Activated T-helper 1 cell treated with anti-CD3 and anti-CD28 coated beads, Interleukin-12 subunit alpha, Interleukin-12 subunit beta, Interleukin-2, Interleukin-4 antibody, amounts not matched to agents 30 ng/mL and 10 ng/mL and 1 ng/mL, durations not matched to agents 14 hours and 24 hours and 36 hours (primary cell): ENCODE measurements at regions of chr7 and their contacts with region 1.

Region 1: DNA sequence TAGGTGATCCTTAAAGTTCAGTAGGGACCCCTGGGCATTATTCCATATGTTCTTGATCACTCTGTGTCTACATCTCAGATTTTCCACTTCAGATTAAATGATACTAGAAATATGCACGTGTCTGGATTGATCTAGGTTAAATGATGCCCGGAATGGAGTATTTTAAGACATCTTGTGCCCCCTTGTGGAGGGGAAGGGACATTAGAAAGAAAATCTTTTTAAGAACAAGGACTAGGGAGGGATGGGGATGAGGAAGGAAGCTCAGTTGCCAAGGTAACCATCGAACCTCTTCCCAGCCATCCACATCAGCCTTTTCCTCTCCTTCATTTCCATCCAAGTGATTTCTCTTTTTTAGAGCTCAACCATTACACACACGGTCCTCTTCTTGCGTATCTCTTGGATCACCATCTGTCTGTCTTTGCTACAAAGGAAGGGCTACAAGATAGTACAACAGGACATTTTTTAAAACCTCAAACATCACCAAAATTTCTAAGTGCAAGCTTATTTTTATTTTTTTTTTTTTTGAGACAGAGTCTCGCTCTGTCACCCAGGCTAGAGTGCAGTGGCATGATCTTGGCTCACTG is 40.5 kb downstream of the PRSS2 start:
- DNase-seq: no peak
- H3K4me3 Mint-ChIP-seq: peak overlapping the region; percentile 79
- H3K27ac Mint-ChIP-seq: peak overlapping the region; percentile 99
- H3K4me1 Mint-ChIP-seq: peaks cover 80% of the 10 kb centered on the region
- H3K27me3 Mint-ChIP-seq: peaks cover 2% of the 10 kb centered on the region

Region 2: GRCh38 chr7:140924019-140924820 is 1887.0 kb before region 1 on chr7:
- intact Hi-C with region 1: loop called (anchors 10 kb)
- DNase-seq: peak; percentile 69
- H3K4me3 Mint-ChIP-seq: no peak overlapping the region
- H3K27ac Mint-ChIP-seq: no peak overlapping the region
- H3K4me1 Mint-ChIP-seq: peaks cover 11% of the 10 kb centered on the region
- H3K27me3 Mint-ChIP-seq: no peaks in the 10 kb centered on the region

Region 3: DNA sequence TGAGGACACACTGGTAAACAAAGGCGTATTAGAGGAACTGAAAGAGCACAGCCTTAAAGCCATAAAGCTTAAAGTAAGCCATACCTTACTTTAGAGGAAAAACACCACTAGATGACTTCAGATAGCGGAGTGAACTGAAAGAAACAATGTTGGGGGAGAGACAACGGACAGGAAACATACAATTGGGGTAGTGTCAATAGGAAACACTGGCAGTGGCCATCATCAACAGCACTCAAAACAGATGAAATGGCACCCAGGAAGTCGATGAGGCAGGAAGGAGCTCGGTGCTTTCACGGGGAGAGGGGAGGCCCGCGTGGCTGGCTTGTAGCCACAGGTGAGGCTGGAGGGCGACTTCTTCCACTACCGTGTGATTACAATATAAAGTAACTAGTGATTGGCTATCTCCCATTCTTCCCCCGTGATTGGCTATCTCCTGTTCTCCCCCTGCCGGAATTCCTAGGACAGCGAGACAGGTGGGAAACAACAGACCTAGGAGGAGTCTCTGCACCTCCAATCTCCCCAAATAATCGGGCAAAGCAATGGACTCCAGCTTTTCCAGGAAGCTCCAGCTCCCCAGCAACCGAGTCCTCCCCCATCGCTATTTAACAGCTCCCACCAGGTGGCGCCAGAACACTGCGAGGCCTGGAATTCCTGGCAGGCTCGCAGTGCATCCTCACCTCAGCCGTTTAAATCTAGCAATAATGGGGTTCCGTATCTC is 835.3 kb before region 1 on chr7:
- intact Hi-C with region 1: loop called (anchors 10 kb)
- DNase-seq: peak; percentile 34
- H3K4me3 Mint-ChIP-seq: peak overlapping the region; percentile 73
- H3K27ac Mint-ChIP-seq: no peak overlapping the region
- H3K4me1 Mint-ChIP-seq: peaks cover 12% of the 10 kb centered on the region
- H3K27me3 Mint-ChIP-seq: no peaks in the 10 kb centered on the region

Region 4: GRCh38 chr7:142496545-142497041 is 314.7 kb before region 1 on chr7:
- intact Hi-C with region 1: loop called (anchors 5 kb)
- DNase-seq: no peak
- H3K4me3 Mint-ChIP-seq: peak overlapping the region; percentile 32
- H3K27ac Mint-ChIP-seq: no peak overlapping the region
- H3K4me1 Mint-ChIP-seq: peaks cover 31% of the 10 kb centered on the region
- H3K27me3 Mint-ChIP-seq: peaks cover 7% of the 10 kb centered on the region

Region 5: DNA sequence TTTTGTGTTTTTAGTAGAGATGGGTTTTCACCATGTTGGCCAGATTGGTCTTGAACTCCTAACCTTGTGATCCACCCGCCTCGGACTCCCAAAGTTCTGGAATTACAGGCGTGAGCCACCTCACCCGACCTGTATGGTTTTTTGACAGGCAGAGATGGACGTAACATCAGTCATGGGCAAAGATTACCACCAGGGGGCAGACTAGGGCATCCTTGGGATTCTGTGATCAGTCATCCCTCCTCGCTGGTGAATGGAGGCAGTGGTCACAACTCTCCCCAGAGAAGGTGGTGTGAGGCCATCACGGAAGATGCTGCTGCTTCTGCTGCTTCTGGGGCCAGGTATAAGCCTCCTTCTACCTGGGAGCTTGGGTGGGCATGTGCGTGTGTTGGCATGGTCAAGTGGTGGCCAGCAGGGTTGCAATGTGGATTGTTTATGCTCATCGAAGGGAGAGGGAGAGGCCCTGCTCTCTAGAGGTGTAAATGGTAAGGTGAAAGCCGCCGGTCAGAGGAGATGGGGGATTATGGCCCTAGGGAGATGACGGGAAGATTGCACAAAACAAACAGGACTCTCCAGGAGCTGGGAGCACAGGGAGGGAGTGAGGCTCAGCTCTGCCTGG is 184.7 kb before region 1 on chr7:
- intact Hi-C with region 1: loop called (anchors 2 kb)
- DNase-seq: peak; percentile 40
- H3K4me3 Mint-ChIP-seq: peak overlapping the region; percentile 85
- H3K27ac Mint-ChIP-seq: peak overlapping the region; percentile 82
- H3K4me1 Mint-ChIP-seq: no peaks in the 10 kb centered on the region
- H3K27me3 Mint-ChIP-seq: peaks cover 18% of the 10 kb centered on the region

Region 6: GRCh38 chr7:142796608-142797385 is 14.4 kb before region 1 on chr7:
- intact Hi-C with region 1: loop called (anchors 1 kb)
- DNase-seq: no peak
- H3K4me3 Mint-ChIP-seq: peak overlapping the region; percentile 97
- H3K27ac Mint-ChIP-seq: peak overlapping the region; percentile 99
- H3K4me1 Mint-ChIP-seq: peaks cover 77% of the 10 kb centered on the region
- H3K27me3 Mint-ChIP-seq: no peaks in the 10 kb centered on the region

Region 7: DNA sequence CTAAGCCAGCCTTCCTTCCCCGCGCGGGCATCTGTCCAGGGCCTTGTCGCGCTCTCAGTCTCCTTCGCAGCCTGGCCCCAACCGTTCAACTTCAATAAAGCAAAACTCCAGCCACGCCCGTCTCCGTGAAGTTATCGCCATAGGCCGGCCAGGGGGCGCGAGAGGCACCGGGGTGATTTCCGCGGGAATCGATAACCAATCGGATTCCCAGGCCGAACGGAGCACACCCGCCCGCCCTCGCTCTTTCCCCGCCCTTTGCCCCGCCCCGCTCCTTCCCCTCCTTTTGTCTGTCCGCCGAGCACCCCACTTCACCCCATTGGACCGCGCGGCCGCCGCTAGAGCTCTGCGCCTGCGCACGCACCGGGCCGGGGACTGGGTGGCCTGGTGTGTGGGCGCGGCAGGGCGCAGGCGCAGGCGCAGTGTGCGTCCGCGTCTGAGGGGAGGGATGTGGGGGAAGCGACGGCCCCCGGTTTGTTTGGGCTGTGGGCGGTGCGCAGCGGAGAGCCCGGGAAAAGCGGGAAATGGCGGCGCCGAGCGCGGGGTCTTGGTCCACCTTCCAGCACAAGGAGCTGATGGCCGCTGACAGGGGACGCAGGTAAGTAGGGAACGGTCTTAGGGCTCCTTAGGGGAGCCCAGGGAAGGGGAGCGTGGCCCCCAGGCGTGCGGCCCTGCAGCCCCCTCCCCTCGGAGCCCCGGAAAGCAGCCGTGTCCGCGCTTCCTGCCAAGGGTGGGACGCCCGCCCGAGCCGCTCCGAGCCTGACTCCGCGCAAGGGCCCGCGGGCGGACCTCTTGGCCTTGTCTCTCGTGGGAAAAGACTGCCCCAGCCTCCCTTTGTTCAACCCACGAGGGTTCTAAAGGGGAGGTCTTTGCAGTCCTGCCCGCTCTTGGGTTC is 476.9 kb after region 1 on chr7 and contains the start of gene CASP2:
- intact Hi-C with region 1: loop called (anchors 2 kb)
- DNase-seq: peak; percentile 98
- H3K4me3 Mint-ChIP-seq: peak within 1 kb of the TSS; percentile 94
- H3K27ac Mint-ChIP-seq: peak within 1 kb of the TSS; percentile 92
- H3K4me1 Mint-ChIP-seq: peaks cover 63% of the 10 kb centered on the region
- H3K27me3 Mint-ChIP-seq: no peaks in the 10 kb centered on the region
- total RNA-seq, gene CASP2: 107 and 110 TPM in 2 replicates